Activated CD4-positive, alpha-beta memory T cell treated with anti-CD3 and anti-CD28 coated beads for 36 hours (primary cell): ENCODE measurements at regions of chr1 and their contacts with region 1.

Region 1: DNA sequence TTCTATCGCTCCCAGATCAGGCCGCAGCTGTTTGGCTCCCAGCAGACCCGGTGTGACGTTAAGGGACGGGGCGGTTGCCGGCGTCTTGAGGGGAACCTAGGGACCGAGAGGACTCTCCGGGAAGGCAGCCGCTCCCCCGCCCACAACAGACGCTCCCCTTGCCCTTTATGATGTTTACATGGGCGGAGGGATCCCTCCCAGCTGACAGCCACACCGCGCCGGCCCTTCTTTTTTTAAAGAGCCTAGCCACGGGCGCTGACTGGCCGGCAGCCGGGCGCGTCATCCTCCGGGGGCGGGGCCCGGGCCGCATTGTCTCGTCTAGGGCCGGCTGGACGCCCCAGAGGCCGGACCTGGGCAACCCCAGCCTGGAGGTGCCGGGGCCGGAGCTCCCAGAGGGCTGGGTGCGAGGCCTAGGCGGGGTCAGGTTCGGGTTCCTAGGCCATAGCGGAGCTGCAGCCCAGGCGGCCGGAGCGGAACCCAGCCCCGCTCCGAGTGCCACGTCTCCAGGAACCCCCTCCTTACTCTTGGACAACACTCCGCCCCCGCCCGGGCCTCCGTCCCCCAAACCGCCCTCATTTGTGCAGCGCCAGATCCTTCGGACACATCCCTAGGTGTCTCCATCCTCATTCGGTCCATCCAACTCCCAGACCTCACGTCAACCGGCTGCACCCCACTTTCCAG is at the start of gene PCAT6:
- DNase-seq: peak; percentile 92
- H3K4me3 Mint-ChIP-seq: peak within 1 kb of the TSS; percentile 87
- H3K27ac Mint-ChIP-seq: peak within 1 kb of the TSS; percentile 69
- H3K4me1 Mint-ChIP-seq: peaks cover 34% of the 10 kb centered on the region
- H3K27me3 Mint-ChIP-seq: no peaks in the 10 kb centered on the region
- total RNA-seq, gene PCAT6: 0.76 to 0.77 TPM

Region 2: GRCh38 chr1:202160377-202160940 is 650.3 kb before region 1 on chr1 and contains the start of gene PTPN7:
- CTCF ChIA-PET with region 1: no interaction called
- POLR2A ChIA-PET with region 1: no interaction called
- intact Hi-C with region 1: loop called (anchors 5 kb)
- DNase-seq: peak; percentile 96
- H3K4me3 Mint-ChIP-seq: peak within 1 kb of the TSS; percentile 89
- H3K27ac Mint-ChIP-seq: peak within 1 kb of the TSS; percentile 97
- H3K4me1 Mint-ChIP-seq: peaks cover 73% of the 10 kb centered on the region
- H3K27me3 Mint-ChIP-seq: no peaks in the 10 kb centered on the region
- total RNA-seq, gene PTPN7: 197 to 199 TPM

Region 3: DNA sequence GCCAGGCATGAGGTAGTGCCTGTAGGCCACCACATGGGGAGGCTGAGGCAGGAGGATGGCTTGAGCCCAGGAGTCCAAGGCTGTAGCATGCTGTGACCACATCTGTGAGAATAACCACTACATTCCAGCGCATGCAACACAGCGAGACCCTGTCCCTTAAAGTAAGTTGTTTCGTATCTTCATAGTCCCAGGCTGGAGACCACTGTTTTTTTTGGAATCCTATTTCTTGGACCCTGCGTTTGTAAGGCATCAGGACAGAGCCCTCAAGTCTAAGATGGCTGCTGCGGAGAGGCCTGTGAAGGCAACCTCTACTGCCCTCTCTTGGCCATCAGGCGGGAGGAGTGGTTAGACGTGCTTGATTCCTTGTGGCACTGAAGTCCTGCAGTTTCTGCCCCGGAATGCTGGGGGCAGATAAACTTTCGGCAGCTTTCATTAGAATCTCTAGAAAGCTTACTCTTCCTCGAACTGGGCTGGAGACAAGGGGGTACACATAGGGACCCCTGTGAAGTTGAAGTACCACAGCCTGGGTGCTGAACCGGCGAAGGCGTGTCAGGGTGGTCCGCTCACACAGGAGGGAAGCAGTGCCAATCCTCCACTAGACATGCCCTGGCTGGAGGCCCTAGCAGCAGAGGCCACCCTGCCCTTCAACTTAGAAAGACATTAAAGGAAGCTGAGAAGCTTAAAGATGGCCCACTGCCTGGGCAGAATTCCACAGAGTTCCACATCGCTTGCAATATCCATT is 41.6 kb after region 1 on chr1:
- CTCF ChIA-PET with region 1: no interaction called
- POLR2A ChIA-PET with region 1: no interaction called
- intact Hi-C with region 1: loop called (anchors 2 kb)
- DNase-seq: peak; percentile 70
- H3K4me3 Mint-ChIP-seq: no peak overlapping the region
- H3K27ac Mint-ChIP-seq: no peak overlapping the region
- H3K4me1 Mint-ChIP-seq: peaks cover 9% of the 10 kb centered on the region
- H3K27me3 Mint-ChIP-seq: no peaks in the 10 kb centered on the region

Region 4: DNA sequence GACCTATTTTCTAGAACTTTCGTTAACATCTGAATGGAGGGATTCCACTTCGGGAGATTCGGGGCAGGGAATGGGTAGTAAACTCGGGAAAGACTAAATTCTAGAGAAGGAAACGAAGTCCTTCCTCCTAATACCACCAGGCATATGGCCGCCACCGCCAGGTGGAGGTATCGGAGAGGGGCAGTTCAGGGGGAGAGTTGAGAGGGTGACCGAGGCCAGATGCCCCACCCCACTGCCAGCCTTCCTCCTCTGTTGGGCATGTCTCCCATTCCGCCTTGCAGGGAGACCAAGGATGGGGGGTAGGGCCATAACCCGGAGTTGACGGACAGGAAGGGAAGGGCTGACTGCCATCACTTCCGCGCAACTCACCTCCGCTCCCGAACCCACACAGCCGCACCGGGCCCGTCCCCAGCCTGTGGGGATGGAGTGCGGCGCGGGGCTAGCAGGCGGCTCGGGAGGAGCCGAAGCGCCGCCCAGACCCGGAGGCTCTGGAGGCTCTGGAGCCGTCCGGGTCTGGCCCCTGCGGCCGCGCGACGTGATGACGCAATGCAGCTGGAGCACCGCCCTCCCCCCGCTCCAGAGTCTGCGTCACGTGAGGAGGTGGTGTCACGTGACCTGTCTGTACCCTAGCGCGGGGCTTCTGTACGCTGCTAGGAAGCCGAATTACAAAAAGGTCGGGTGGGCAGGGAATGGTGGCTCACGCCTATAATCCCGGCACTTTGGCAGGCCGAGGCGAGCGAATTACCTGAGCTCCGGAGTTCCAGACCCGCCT is 116.2 kb after region 1 on chr1 and contains the start of gene KLHL12:
- CTCF ChIA-PET with region 1: no interaction called
- POLR2A ChIA-PET with region 1: no interaction called
- intact Hi-C with region 1: loop called (anchors 2 kb)
- DNase-seq: peak; percentile 97
- H3K4me3 Mint-ChIP-seq: peak within 1 kb of the TSS; percentile 92
- H3K27ac Mint-ChIP-seq: peak within 1 kb of the TSS; percentile 90
- H3K4me1 Mint-ChIP-seq: peaks cover 26% of the 10 kb centered on the region
- H3K27me3 Mint-ChIP-seq: no peaks in the 10 kb centered on the region
- total RNA-seq, gene KLHL12: 35.5 to 38.3 TPM

Region 5: DNA sequence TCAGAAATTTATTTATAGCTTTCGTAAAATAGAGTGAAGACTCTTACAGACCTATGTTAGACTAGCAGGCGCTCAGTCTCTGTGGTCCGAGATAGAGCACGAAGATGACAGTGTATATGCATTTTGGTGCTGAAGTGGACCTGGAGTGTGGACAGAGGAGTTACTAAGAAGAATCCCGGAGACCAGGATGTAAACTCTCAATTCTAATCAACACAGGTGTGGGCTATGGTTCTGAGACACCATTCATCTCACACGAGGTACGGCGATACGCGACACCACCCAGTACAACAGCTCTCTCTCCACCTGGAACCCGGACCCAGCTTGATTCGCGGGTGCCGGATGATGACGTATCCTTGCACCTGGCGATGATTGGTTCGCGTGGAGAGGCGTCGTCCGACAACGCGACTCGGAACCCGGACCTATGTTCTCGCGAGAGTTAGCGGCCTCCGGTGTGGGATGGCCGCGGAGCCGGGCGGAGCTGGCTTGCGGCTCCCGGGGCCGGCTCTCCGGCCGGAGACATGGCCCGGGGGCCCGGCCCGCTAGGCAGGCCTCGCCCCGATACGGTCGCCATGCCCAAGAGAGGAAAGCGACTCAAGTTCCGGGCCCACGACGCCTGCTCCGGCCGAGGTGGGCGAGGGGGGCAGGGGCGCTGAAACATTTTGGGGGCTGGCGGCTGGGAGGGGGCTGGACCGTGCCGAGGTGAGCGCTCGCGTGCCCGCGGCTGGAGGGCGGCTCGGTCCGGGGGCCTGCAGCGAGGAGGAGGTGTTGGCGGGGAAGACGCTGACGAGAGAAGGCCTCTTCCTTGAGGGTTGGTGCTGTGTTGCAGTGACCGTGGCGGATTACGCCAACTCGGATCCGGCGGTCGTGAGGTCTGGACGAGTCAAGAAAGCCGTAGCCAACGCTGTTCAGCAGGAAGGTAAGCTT is 196.5 kb after region 1 on chr1 and contains the start of gene TMEM183A:
- CTCF ChIA-PET with region 1: no interaction called
- POLR2A ChIA-PET with region 1: interaction called, 5 read pairs
- intact Hi-C with region 1: loop called (anchors 2 kb)
- DNase-seq: peak; percentile 97
- H3K4me3 Mint-ChIP-seq: peak within 1 kb of the TSS; percentile 80
- H3K27ac Mint-ChIP-seq: peak within 1 kb of the TSS; percentile 96
- H3K4me1 Mint-ChIP-seq: peaks cover 24% of the 10 kb centered on the region
- H3K27me3 Mint-ChIP-seq: no peaks in the 10 kb centered on the region
- total RNA-seq, gene TMEM183A: 68.1 to 76.5 TPM